ENCODE measurements at regions of chr19 and their contacts with region 1.

Region 1: GRCh38 chr19:8641908-8642547 is 11.6 kb downstream of the NFILZ start:
- DNase-seq: peak; percentile 10
- H3K4me3 Mint-ChIP-seq: no peak overlapping the region
- H3K27ac Mint-ChIP-seq: no peak overlapping the region
- H3K4me1 Mint-ChIP-seq: peaks cover 4% of the 10 kb centered on the region
- H3K27me3 Mint-ChIP-seq: peaks cover 9% of the 10 kb centered on the region

Region 2: GRCh38 chr19:8526345-8527067 is 115.5 kb before region 1 on chr19:
- CTCF ChIA-PET with region 1: no interaction called
- intact Hi-C with region 1: no loop called
- DNase-seq: no peak
- H3K4me3 Mint-ChIP-seq: no peak overlapping the region
- H3K27ac Mint-ChIP-seq: no peak overlapping the region
- H3K4me1 Mint-ChIP-seq: peaks cover 15% of the 10 kb centered on the region
- H3K27me3 Mint-ChIP-seq: no peaks in the 10 kb centered on the region

Region 3: GRCh38 chr19:8615813-8616596 is 26.0 kb before region 1 on chr19:
- CTCF ChIA-PET with region 1: interaction called, 11 read pairs
- intact Hi-C with region 1: no loop called
- DNase-seq: peak; percentile 83
- H3K4me3 Mint-ChIP-seq: no peak overlapping the region
- H3K27ac Mint-ChIP-seq: peak overlapping the region; percentile 57
- H3K4me1 Mint-ChIP-seq: peaks cover 16% of the 10 kb centered on the region
- H3K27me3 Mint-ChIP-seq: no peaks in the 10 kb centered on the region

Region 4: DNA sequence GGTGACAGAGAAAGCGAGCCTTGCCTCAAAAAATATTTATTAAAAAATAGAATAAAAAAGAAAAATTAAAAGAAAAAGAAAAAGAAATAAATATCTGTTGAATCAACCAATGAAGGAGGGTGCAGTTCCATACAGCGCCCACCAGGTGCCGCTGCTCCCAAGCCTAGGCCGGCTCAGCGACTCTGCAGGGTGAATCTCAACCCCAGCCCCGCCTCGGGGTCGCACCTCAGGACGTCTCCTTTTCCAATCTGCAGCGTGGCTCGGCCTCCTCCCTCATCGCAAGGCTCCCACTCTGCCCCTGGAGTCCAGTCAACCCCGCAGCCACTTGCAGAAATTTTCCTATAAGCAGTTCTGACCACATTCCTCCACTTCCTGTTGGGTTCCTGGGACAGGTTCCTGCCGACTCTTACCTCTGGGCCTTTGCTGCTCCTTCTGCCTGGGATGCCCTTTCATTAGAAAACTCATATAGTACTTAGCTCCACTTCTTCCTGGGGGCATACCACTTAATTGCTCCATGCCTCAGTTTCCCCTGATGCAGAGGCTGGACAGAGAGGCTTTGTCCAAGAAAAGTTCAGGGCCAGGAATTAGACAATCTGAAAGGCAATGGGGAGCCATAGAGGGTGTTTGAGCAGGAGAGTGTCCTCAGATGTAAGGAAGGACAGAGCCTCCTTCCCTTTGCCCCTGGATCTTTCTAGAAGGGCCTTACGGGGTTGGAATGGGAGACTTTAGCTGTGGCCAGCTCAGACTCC is 12.7 kb after region 1 on chr19:
- CTCF ChIA-PET with region 1: interaction called, 12 read pairs
- intact Hi-C with region 1: no loop called
- DNase-seq: peak; percentile 71
- H3K4me3 Mint-ChIP-seq: no peak overlapping the region
- H3K27ac Mint-ChIP-seq: no peak overlapping the region
- H3K4me1 Mint-ChIP-seq: peaks cover 13% of the 10 kb centered on the region
- H3K27me3 Mint-ChIP-seq: no peaks in the 10 kb centered on the region

Region 5: DNA sequence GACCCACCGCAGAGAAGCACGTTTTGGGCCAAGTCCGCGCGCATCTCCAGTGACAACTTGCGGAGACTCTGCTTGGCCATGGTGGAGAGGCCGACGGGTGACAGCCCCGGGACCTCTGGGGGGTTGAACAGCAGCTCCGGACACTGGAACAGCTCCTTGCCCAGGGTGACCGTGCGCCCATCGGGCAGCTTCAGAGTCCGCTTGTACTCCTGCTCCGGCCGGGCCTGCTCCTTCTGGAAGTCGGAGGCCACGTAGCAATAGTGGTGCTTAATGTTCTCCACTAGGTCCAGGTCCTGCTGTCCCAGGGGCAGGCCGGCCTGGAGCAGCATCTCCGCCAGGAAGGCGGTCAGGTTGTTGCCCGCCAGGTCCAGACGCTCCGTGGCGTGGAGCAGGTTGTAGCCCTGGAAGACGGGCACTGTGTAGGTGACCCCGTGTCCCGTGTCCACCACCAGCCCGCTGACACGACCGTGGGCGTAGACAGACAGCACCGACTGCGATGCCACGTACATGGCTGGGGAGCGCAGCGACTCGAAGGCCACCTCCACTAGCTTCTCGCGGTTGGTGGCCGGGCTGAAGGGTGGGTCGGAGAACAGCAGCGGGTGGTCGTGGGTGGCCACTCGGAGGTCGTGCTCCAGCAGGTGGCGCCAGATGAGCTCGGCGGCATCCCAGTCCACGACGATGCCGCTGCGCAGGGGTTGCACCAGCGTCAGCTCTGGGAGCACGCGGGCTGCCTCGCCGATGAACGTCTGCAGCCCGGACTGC is 55.8 kb after region 1 on chr19:
- CTCF ChIA-PET with region 1: interaction called, 10 read pairs
- intact Hi-C with region 1: no loop called
- DNase-seq: no peak
- H3K4me3 Mint-ChIP-seq: no peak overlapping the region
- H3K27ac Mint-ChIP-seq: no peak overlapping the region
- H3K4me1 Mint-ChIP-seq: peaks cover 24% of the 10 kb centered on the region
- H3K27me3 Mint-ChIP-seq: peaks cover 3% of the 10 kb centered on the region

Region 6: GRCh38 chr19:8731428-8732169 is 89.6 kb after region 1 on chr19:
- CTCF ChIA-PET with region 1: no interaction called
- intact Hi-C with region 1: no loop called
- DNase-seq: peak; percentile 32
- H3K4me3 Mint-ChIP-seq: no peak overlapping the region
- H3K27ac Mint-ChIP-seq: no peak overlapping the region
- H3K4me1 Mint-ChIP-seq: no peaks in the 10 kb centered on the region
- H3K27me3 Mint-ChIP-seq: no peaks in the 10 kb centered on the region

Measured in activated naive CD4-positive, alpha-beta T cell treated with anti-CD3 and anti-CD28 coated beads for 36 hours (primary cell).